PC-3 (cell line): ENCODE measurements at regions of chr16 and their contacts with region 1.

Region 1: GRCh38 chr16:61659936-61660335 is 376.3 kb downstream of the CDH8 start:
- DNase-seq: peak; percentile 3
- ATAC-seq: peak; percentile 73
- H3K4me3 ChIP-seq: no peak overlapping the region
- H3K27ac ChIP-seq: no peak overlapping the region
- H3K4me1 ChIP-seq: no peaks in the 10 kb centered on the region
- H3K27me3 ChIP-seq: no peaks in the 10 kb centered on the region
- CTCF ChIP-seq: no peak

Region 2: DNA sequence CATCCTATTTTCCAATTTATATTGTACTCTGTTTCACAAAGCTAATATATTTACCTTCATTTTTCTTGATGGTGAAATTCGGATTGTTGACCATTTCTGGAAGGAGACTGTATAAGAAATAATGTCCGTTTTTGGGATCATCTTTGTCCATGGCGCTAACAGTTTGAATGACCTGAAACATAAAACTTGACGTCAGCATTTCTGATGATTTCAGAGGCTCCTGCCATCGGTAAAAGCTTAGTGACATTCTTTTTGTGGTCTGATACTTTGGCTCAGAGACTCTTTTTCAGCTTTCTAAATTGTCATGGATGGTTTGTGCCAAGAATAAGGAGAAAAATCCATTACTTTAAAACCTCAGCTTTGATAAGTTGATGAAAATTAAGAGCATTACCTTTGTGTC is 53.9 kb after region 1 on chr16:
- CTCF ChIA-PET with region 1: no interaction called
- POLR2A ChIA-PET with region 1: no interaction called
- intact Hi-C with region 1: loop called (anchors 10 kb)
- DNase-seq: no peak
- ATAC-seq: no peak
- H3K4me3 ChIP-seq: no peak overlapping the region
- H3K27ac ChIP-seq: no peak overlapping the region
- H3K4me1 ChIP-seq: no peaks in the 10 kb centered on the region
- H3K27me3 ChIP-seq: no peaks in the 10 kb centered on the region
- CTCF ChIP-seq: no peak